ENCODE measurements at regions of chr15 and their contacts with region 1.

Region 1: DNA sequence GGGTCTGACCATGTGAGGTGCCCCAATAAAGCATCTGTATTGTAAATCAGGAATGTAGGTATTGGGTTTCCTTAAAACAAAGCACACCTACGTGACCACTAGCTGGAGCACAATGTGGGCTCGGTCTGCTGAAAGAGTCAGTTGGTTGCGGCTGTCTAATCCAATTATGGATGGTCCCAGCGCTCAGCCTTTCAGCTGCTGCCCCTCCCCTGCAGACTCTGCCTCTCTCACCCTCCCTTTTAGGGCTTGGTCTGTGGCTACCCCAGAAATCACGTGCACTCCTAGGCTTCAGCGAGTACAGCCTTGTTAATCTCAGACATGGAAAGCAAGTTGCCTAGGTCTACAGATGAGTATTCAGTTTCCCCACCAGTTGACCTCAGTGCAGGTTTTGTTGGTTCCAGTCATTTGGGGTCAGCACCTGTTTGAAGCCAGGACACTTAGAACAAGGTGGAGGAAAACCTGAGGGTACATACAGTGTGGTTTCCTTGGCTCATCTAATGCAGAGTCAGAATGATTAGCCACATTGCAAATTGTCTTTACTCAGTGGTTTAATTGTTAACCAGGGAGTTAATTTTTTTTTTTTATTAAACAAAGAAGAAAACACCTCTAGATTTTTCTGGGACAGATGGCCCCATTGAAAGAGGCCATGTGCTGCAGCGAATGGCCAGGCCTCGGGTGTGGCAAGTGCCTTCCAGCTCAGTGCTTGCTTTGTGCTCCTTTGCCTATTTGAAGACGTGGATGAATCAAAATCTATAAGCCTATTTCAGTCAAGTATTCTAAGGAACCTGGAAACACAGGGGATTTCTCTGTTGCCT is 137.7 kb downstream of the IGF1R start:
- DNase-seq: peak; percentile 36
- ATAC-seq: peak; percentile 71
- H3K4me3 ChIP-seq: peak overlapping the region in 1 of 3 experiments; percentile 37; a peak in 2 of 6 replicates
- H3K27ac ChIP-seq: peak overlapping the region; percentile 55
- H3K4me1 ChIP-seq: peaks cover 60% of the 10 kb centered on the region
- H3K27me3 ChIP-seq: no peaks in the 10 kb centered on the region
- CTCF ChIP-seq: no peak
- EP300 ChIP-seq: no peak
- POLR2A ChIP-seq: no peak
- RAD21 ChIP-seq: no peak

Region 2: DNA sequence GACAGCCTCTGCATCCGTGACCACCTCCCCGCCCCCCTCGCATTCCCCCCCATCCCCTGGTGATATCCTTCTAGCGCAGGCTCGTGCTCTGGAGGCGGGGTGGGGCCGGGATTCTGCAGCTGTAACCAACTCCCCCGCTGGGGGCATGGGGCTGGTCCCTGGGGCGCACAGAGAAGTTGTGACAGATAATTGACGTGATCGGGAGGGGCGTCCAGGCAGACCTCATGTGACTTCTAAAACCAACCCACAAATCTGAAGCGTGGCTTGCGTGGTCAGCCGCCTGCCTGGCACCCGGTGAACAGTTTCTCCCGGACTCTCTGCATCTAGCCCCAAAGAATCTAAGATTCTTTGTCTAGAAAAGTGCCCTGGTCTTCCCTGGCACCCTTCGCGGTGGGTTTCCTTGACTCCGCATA is 238.3 kb before region 1 on chr15:
- CTCF ChIA-PET with region 1: no interaction called
- POLR2A ChIA-PET with region 1: no interaction called
- in situ Hi-C with region 1: no loop called
- intact Hi-C with region 1: no loop called
- DNase-seq: no peak
- ATAC-seq: no peak; the same call in 2 of the 3 replicates
- H3K4me3 ChIP-seq: no peak overlapping the region
- H3K27ac ChIP-seq: no peak overlapping the region
- H3K4me1 ChIP-seq: no peaks in the 10 kb centered on the region
- H3K27me3 ChIP-seq: peaks cover 4 to 65% of the 10 kb centered on the region in 2 experiments
- CTCF ChIP-seq: no peak
- EP300 ChIP-seq: no peak
- POLR2A ChIP-seq: no peak
- RAD21 ChIP-seq: no peak

Region 3: DNA sequence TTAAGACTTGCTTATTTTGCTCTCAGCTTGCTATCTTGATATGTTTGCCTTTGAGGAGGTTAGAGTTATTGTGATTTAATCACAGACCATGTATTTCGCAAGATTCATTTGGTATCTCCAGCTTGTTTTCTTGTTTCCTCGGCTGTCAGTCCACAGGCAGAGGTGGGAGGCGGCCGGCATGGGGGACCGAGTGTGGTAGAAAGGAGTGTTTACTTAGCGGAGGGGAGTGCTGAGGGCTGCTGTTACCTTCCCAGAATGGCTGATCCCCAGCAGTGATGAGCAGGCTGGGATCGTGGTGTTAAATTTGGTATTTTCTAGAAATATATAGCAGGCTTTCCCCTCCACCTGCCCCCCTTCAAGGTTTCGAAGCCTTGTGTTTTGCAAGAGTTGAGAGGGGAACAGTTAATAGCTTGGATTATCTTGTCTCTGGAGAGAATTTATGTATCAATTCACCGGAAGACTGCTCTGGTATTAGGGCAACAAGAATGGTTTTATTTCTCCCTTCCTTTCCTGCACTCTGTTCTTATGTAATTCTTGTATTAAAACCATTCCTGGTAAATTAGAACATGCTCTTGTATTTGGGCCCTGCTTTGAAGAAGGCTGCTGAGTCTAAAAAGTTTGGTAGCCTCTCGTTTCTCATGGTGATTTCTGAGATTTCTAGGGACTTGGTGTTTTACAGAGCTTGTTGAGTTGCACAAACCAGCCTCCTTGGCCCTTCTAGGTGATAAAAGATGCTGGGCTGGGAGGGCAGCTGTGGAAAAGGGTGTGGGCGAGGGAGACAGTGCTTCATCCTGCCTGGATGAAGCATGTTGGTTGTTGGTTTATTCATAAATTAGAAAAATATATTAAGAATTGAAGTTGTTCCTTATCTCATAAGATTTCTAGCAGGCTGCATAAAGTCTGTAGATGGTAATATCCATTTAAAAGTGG is 13.7 kb after region 1 on chr15:
- CTCF ChIA-PET with region 1: no interaction called
- POLR2A ChIA-PET with region 1: interaction called, 3 read pairs
- in situ Hi-C with region 1: no loop called
- intact Hi-C with region 1: loop called (anchors 2 kb)
- DNase-seq: peak; percentile 52
- ATAC-seq: peak; percentile 79
- H3K4me3 ChIP-seq: peak overlapping the region; percentile 3 to 52 (median 16); a peak in 3 of 6 replicates
- H3K27ac ChIP-seq: peak overlapping the region; percentile 43
- H3K4me1 ChIP-seq: peaks cover 54% of the 10 kb centered on the region
- H3K27me3 ChIP-seq: no peaks in the 10 kb centered on the region
- CTCF ChIP-seq: no peak
- EP300 ChIP-seq: 0 out of 4 replicates have a peak, but pooled peaks of 1 of the 2 experiments have one; percentile 34
- POLR2A ChIP-seq: no peak
- RAD21 ChIP-seq: no peak

Region 4: DNA sequence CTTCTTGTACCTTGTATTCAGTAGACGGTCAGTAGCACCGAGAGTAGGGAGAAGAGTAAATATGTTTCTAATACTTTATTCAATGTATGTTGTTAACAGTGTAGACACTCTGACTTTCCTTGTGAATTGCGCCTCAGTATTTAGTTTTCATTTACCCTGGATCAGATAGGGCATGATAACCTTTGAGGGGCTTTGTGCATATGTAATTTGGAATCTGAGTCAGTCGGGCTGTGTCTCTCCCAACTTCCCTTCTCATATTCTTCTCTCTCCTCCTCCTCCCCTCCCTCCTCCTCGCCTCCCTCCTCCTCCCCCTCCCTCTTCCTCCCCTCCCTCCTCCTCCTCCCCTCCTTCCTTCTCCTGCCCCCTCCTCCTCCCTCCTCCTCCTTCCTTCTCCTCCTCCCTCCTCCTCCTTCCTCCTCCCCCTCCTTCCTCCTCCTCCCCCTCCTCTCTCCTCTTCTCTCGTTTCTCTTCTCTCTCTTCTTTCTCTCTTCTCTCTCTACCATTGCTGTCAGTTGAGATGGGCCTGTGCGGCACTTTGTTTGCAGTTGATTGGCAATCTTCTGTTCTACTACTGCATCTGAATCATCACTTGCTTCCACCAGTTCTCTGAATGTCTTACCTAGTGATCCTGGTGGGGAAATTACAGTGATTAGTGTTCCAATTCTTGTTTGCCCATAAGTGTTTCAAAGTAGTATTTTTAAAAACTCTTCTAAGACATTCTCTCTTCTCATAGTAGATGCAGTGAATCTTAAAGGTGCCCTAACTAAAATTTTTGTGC is 59.3 kb after region 1 on chr15:
- CTCF ChIA-PET with region 1: no interaction called
- POLR2A ChIA-PET with region 1: no interaction called
- in situ Hi-C with region 1: loop called (anchors 5 kb)
- intact Hi-C with region 1: no loop called
- DNase-seq: no peak
- ATAC-seq: no peak
- H3K4me3 ChIP-seq: no peak overlapping the region
- H3K27ac ChIP-seq: no peak overlapping the region
- H3K4me1 ChIP-seq: peaks cover 48% of the 10 kb centered on the region
- H3K27me3 ChIP-seq: no peaks in the 10 kb centered on the region
- CTCF ChIP-seq: no peak
- EP300 ChIP-seq: no peak
- POLR2A ChIP-seq: no peak
- RAD21 ChIP-seq: no peak